ENCODE measurements at regions of chr10 and their contacts with region 1.

Region 1: GRCh38 chr10:62437696-62438095 is 63.5 kb downstream of the ZNF365 start:
- DNase-seq: no peak
- ATAC-seq: peak; percentile 81
- H3K4me3 ChIP-seq: no peak overlapping the region
- H3K27ac ChIP-seq: no peak overlapping the region
- H3K4me1 ChIP-seq: peaks cover 6% of the 10 kb centered on the region; the same call in 1 of the 2 replicates
- H3K27me3 ChIP-seq: no peaks in the 10 kb centered on the region; a peak in 1 of 4 replicates
- CTCF ChIP-seq: peak; percentile 54 to 77 (median 68); a peak in 5 of 6 replicates
- EP300 ChIP-seq: no peak
- POLR2A ChIP-seq: no peak
- RAD21 ChIP-seq: peak; percentile 94

Region 2: GRCh38 chr10:62451611-62451975 is 13.9 kb after region 1 on chr10:
- CTCF ChIA-PET with region 1: interaction called, 33 read pairs
- POLR2A ChIA-PET with region 1: interaction called, 3 read pairs
- RAD21 ChIA-PET with region 1: interaction called, 15 read pairs
- SMC1A ChIA-PET with region 1: interaction called, 23 read pairs
- in situ Hi-C with region 1: no loop called
- intact Hi-C with region 1: no loop called
- DNase-seq: no peak
- ATAC-seq: no peak
- H3K4me3 ChIP-seq: no peak overlapping the region
- H3K27ac ChIP-seq: no peak overlapping the region
- H3K4me1 ChIP-seq: peaks cover 4% of the 10 kb centered on the region; the same call in 1 of the 2 replicates
- H3K27me3 ChIP-seq: peaks cover 3% of the 10 kb centered on the region in 2 experiments; a peak in 3 of 4 replicates
- CTCF ChIP-seq: no peak
- EP300 ChIP-seq: no peak
- POLR2A ChIP-seq: no peak
- RAD21 ChIP-seq: no peak

Region 3: DNA sequence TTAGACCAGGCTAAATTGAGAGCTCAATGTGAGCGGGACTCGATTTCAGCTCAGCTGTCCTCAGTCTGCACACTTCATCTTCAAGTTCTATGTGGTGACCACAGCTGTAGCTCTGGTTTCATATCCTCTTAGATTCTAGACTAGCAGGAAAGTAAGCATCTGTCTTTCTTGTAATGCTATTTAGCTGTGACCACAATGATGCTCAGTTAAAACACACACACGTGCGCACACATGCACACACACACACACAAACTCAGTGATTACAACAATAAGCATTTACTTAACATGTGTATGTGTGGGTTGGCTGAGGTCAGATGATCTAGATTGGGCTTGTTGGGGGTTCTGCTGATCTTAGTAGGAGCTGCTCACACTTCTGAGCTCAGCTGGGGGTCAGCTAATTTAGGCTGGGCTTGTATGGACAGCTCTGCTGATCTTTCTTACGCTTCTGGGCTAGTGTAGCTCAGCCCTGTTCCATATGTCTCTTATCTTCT is 19.0 kb after region 1 on chr10:
- CTCF ChIA-PET with region 1: interaction called, 33 read pairs
- POLR2A ChIA-PET with region 1: interaction called, 3 read pairs
- RAD21 ChIA-PET with region 1: interaction called, 15 read pairs
- SMC1A ChIA-PET with region 1: interaction called, 19 read pairs
- in situ Hi-C with region 1: no loop called
- intact Hi-C with region 1: no loop called
- DNase-seq: peak; percentile 86
- ATAC-seq: peak; percentile 97
- H3K4me3 ChIP-seq: no peak overlapping the region
- H3K27ac ChIP-seq: no peak overlapping the region
- H3K4me1 ChIP-seq: peaks cover 21% of the 10 kb centered on the region
- H3K27me3 ChIP-seq: peaks cover 0 to 2% of the 10 kb centered on the region in 2 experiments; a peak in 1 of 4 replicates
- CTCF ChIP-seq: no peak
- EP300 ChIP-seq: peak; percentile 90 to 96
- POLR2A ChIP-seq: no peak
- RAD21 ChIP-seq: no peak

Region 4: DNA sequence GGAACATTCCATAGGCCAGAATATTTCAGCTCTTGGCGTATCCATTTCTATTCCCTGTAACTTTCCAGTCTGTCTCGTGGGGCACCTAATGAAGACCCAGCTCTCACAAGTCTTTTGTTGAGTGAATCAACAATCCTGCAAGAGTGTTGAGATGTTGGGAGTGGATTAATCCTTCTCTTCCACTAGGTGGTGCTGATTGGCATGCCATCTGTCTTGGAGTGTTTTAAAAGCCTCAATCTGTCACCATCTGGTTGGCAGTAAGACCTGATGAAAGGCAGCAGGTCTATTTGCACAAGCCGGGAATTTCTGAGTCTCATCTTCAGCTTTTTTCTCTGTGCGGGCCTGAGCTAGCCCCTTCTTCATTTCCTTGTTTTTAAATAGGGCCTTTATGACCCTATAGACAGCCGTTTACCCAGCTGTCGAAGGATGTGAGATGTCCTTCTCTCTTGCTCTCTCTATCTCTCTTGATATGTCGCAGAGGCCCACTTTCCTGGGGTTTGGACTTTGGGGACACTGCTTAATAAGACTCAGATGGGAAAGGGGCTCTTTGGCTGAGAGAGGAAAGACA is 117.0 kb after region 1 on chr10:
- CTCF ChIA-PET with region 1: interaction called, 11 read pairs
- POLR2A ChIA-PET with region 1: no interaction called
- RAD21 ChIA-PET with region 1: interaction called, 5 read pairs
- SMC1A ChIA-PET with region 1: interaction called, 8 read pairs
- in situ Hi-C with region 1: no loop called
- intact Hi-C with region 1: loop called (anchors 10 kb)
- DNase-seq: no peak
- ATAC-seq: peak; percentile 93
- H3K4me3 ChIP-seq: no peak overlapping the region
- H3K27ac ChIP-seq: no peak overlapping the region
- H3K4me1 ChIP-seq: no peaks in the 10 kb centered on the region
- H3K27me3 ChIP-seq: peaks cover 2 to 4% of the 10 kb centered on the region in 2 experiments; a peak in 2 of 4 replicates
- CTCF ChIP-seq: peak; percentile 63 to 68 (median 63); a peak in 5 of 6 replicates
- EP300 ChIP-seq: no peak
- POLR2A ChIP-seq: no peak
- RAD21 ChIP-seq: peak; percentile 85

Region 5: GRCh38 chr10:62594093-62594520 is 156.4 kb after region 1 on chr10:
- CTCF ChIA-PET with region 1: interaction called, 23 read pairs
- POLR2A ChIA-PET with region 1: no interaction called
- RAD21 ChIA-PET with region 1: interaction called, 18 read pairs
- SMC1A ChIA-PET with region 1: interaction called, 23 read pairs
- in situ Hi-C with region 1: no loop called
- intact Hi-C with region 1: loop called (anchors 1 kb)
- DNase-seq: peak; percentile 30
- ATAC-seq: peak; percentile 94
- H3K4me3 ChIP-seq: no peak overlapping the region
- H3K27ac ChIP-seq: no peak overlapping the region
- H3K4me1 ChIP-seq: peaks cover 7% of the 10 kb centered on the region
- H3K27me3 ChIP-seq: no peaks in the 10 kb centered on the region
- CTCF ChIP-seq: peak; percentile 90 to 97 (median 95)
- EP300 ChIP-seq: no peak
- POLR2A ChIP-seq: no peak
- RAD21 ChIP-seq: peak; percentile 100

Region 6: DNA sequence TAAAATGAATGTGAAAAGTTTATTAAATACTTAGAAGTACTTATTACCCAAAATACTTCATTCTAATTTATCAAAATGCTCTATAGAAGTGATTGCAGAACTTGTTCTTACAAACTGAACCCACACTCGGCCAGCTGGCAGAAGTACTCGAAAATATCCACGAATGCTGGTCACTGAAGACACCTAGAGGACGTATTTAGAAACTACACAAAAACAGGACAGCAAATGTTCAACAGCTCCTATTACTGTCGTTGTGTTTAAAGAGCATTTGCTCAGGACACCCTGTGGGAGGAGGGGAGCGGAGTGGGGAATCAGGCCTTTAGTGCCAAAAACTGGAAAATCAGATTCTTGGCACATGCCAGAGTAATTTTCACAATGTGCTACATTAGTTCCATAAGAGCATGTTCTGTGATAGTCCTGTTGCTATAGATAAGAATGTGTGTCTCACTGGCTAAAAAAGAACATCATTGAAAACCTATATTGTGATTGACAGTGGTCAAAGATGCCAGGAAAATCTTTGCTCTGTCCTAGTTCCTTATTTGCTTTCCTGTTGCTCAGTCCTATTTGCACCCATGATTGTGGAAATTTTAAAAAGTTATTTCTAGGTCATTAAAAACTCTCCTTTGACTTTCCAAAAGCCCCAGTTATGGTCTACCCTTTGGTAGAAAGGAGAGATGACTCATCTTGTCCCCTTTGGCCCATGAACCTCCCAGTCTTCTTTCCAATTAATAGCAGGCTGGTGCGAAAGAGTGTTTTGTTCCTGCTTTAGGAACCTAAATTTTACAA is 646.4 kb after region 1 on chr10:
- CTCF ChIA-PET with region 1: interaction called, 28 read pairs
- POLR2A ChIA-PET with region 1: interaction called, 3 read pairs
- RAD21 ChIA-PET with region 1: interaction called, 8 read pairs
- SMC1A ChIA-PET with region 1: interaction called, 10 read pairs
- in situ Hi-C with region 1: no loop called
- intact Hi-C with region 1: loop called (anchors 2 kb)
- DNase-seq: peak; percentile 38
- ATAC-seq: peak; percentile 94
- H3K4me3 ChIP-seq: no peak overlapping the region
- H3K27ac ChIP-seq: no peak overlapping the region
- H3K4me1 ChIP-seq: no peaks in the 10 kb centered on the region
- H3K27me3 ChIP-seq: no peaks in the 10 kb centered on the region; a peak in 1 of 4 replicates
- CTCF ChIP-seq: peak; percentile 63 to 84 (median 76)
- EP300 ChIP-seq: no peak
- POLR2A ChIP-seq: no peak
- RAD21 ChIP-seq: peak; percentile 99

Region 7: DNA sequence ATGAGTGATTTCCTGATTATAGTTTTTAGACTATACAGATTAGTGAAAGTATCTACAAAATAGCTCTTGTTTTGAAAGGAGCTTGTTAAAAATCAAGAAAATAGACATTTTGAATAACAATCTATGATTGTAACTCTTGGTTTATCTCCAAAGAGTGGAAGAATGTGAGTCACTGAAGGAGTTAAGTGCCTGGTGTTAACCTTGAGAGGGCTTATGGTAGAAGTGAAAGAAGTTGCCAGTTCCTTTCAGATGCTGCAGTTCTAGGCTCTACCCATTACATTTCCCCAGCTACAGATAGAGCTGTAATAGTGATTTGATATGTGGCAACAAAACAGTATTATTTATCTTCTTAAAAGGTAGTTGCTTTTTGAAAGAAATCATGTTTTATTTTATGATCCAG is 708.1 kb after region 1 on chr10:
- CTCF ChIA-PET with region 1: interaction called, 10 read pairs
- POLR2A ChIA-PET with region 1: no interaction called
- RAD21 ChIA-PET with region 1: no interaction called
- SMC1A ChIA-PET with region 1: interaction called, 3 read pairs
- in situ Hi-C with region 1: no loop called
- intact Hi-C with region 1: no loop called
- DNase-seq: no peak
- ATAC-seq: peak; percentile 80
- H3K4me3 ChIP-seq: no peak overlapping the region
- H3K27ac ChIP-seq: no peak overlapping the region
- H3K4me1 ChIP-seq: no peaks in the 10 kb centered on the region; the same call in 1 of the 2 replicates
- H3K27me3 ChIP-seq: no peaks in the 10 kb centered on the region
- CTCF ChIP-seq: no peak
- EP300 ChIP-seq: no peak
- POLR2A ChIP-seq: no peak
- RAD21 ChIP-seq: no peak

Measured in GM12878 (cell line).